Caco-2 (cell line): ENCODE measurements at regions of chr6 and their contacts with region 1.

Region 1: GRCh38 chr6:109705258-109705657 is 14.2 kb downstream of the FIG4 start:
- DNase-seq: peak; percentile 75 to 83
- H3K4me3 ChIP-seq: no peak overlapping the region
- H3K4me3 Mint-ChIP-seq: no peak overlapping the region
- H3K27ac Mint-ChIP-seq: no peak overlapping the region
- H3K4me1 ChIP-seq: no peaks in the 10 kb centered on the region
- H3K4me1 Mint-ChIP-seq: no peaks in the 10 kb centered on the region
- H3K27me3 ChIP-seq: no peaks in the 10 kb centered on the region
- H3K27me3 Mint-ChIP-seq: no peaks in the 10 kb centered on the region
- CTCF ChIP-seq: peak; percentile 96 to 97

Region 2: GRCh38 chr6:109455502-109456282 is 249.6 kb before region 1 on chr6 and contains the start of gene MICAL1:
- CTCF ChIA-PET with region 1: interaction called, 10 read pairs
- POLR2A ChIA-PET with region 1: no interaction called
- intact Hi-C with region 1: no loop called
- DNase-seq: peak; percentile 69 to 78
- H3K4me3 ChIP-seq: peak within 1 kb of the TSS; percentile 84
- H3K4me3 Mint-ChIP-seq: peak within 1 kb of the TSS; percentile 99
- H3K27ac Mint-ChIP-seq: peak within 1 kb of the TSS; percentile 76
- H3K4me1 ChIP-seq: peaks cover 13% of the 10 kb centered on the region
- H3K4me1 Mint-ChIP-seq: no peaks in the 10 kb centered on the region
- H3K27me3 ChIP-seq: no peaks in the 10 kb centered on the region
- H3K27me3 Mint-ChIP-seq: no peaks in the 10 kb centered on the region
- CTCF ChIP-seq: peak in 1 of 2 experiments; percentile 40
- total RNA-seq, gene MICAL1: 11.7 and 11.8 TPM in 2 replicates

Region 3: DNA sequence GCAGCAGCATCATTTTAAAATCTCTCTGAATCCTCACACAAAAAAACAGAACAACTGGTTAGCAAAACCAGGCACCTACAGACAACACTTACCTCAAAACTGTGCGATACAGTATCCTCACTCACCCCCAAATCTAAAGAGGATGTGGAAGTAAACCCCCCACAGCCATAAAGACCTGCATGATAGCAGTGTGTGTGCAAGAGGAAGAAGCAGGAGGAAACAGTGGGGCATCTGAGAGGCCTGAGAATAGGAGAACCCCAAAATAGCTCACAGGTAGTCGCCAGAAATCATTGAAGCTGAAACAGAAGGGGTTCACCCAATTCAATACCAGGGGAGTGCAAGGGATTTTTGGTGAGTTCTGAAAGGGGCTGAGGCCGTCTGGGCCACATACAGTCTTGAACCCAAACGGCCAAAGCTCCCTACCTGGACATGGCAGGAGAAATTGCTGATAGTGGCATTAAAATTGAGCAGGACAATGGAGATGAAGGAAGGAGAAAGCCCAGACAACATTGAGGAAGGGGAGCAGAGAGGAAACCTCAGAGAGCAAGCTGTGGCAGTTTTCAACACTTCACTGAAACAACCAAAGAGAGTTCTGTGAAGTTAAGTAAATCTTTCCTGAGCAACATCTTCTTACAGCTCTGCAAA is 115.6 kb after region 1 on chr6:
- CTCF ChIA-PET with region 1: interaction called, 4 read pairs
- POLR2A ChIA-PET with region 1: no interaction called
- intact Hi-C with region 1: loop called (anchors 1 kb)
- DNase-seq: no peak
- H3K4me3 ChIP-seq: no peak overlapping the region
- H3K4me3 Mint-ChIP-seq: no peak overlapping the region
- H3K27ac Mint-ChIP-seq: no peak overlapping the region
- H3K4me1 ChIP-seq: no peaks in the 10 kb centered on the region
- H3K4me1 Mint-ChIP-seq: no peaks in the 10 kb centered on the region
- H3K27me3 ChIP-seq: no peaks in the 10 kb centered on the region
- H3K27me3 Mint-ChIP-seq: no peaks in the 10 kb centered on the region
- CTCF ChIP-seq: no peak

Region 4: GRCh38 chr6:109892436-109893435 is 187.5 kb after region 1 on chr6:
- CTCF ChIA-PET with region 1: no interaction called
- POLR2A ChIA-PET with region 1: no interaction called
- intact Hi-C with region 1: loop called (anchors 2 kb)
- DNase-seq: peak in 1 of 2 experiments; percentile 31
- H3K4me3 ChIP-seq: no peak overlapping the region
- H3K4me3 Mint-ChIP-seq: peak overlapping the region; percentile 46
- H3K27ac Mint-ChIP-seq: no peak overlapping the region
- H3K4me1 ChIP-seq: peaks cover 8% of the 10 kb centered on the region; the same call in 1 of the 2 replicates
- H3K4me1 Mint-ChIP-seq: peaks cover 13% of the 10 kb centered on the region
- H3K27me3 ChIP-seq: no peaks in the 10 kb centered on the region
- H3K27me3 Mint-ChIP-seq: peaks cover 1% of the 10 kb centered on the region
- CTCF ChIP-seq: no peak

Region 5: DNA sequence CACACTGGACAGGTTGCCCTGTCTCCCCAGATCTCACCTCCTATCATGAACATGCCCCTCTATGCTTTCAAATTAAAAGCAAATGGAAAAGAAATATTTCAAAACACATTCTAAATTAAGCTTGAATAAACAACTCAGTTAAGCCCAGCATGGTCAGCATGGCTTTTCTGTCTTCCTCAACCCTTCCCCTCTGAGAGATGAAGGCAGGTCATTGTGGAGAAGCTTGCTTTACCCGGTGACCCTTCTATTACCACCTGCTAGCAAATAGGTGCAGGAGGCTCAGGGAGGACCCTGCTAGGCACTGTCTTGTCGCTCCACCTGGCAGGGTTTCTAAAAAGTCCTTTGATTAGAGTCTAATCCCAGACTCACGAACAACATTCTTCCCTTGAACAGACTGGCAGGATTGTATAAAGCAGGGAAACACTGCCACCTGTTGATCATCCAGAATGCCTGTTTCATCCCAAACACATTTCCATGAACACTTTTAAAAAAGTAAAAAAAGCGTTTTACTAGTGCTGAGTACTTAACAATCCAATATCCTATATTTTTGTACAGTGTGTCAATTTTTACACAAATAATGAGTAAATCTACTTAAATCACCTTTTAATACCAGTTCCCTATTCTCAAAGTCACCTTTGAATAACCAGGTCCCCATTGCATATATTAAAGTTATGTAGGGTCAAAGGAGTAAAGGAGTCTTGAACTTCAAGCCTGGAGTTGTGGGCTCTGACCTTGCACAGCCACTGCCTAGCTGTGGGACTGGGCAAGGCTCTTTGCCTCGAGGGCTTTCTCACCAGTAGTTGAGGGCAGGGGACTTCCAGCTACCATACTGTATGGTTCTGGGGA is 348.4 kb after region 1 on chr6:
- CTCF ChIA-PET with region 1: interaction called, 3 read pairs
- POLR2A ChIA-PET with region 1: no interaction called
- intact Hi-C with region 1: loop called (anchors 1 kb)
- DNase-seq: peak in 1 of 2 experiments; percentile 57
- H3K4me3 ChIP-seq: no peak overlapping the region
- H3K4me3 Mint-ChIP-seq: no peak overlapping the region
- H3K27ac Mint-ChIP-seq: no peak overlapping the region
- H3K4me1 ChIP-seq: no peaks in the 10 kb centered on the region
- H3K4me1 Mint-ChIP-seq: no peaks in the 10 kb centered on the region
- H3K27me3 ChIP-seq: no peaks in the 10 kb centered on the region; the same call in 1 of the 2 replicates
- H3K27me3 Mint-ChIP-seq: peaks cover 10% of the 10 kb centered on the region
- CTCF ChIP-seq: peak; percentile 67 to 68

Region 6: GRCh38 chr6:110114004-110114403 is 408.7 kb after region 1 on chr6:
- CTCF ChIA-PET with region 1: no interaction called
- POLR2A ChIA-PET with region 1: no interaction called
- intact Hi-C with region 1: no loop called
- DNase-seq: no peak
- H3K4me3 ChIP-seq: no peak overlapping the region
- H3K4me3 Mint-ChIP-seq: no peak overlapping the region
- H3K27ac Mint-ChIP-seq: no peak overlapping the region
- H3K4me1 ChIP-seq: no peaks in the 10 kb centered on the region
- H3K4me1 Mint-ChIP-seq: peaks cover 6% of the 10 kb centered on the region
- H3K27me3 ChIP-seq: no peaks in the 10 kb centered on the region
- H3K27me3 Mint-ChIP-seq: no peaks in the 10 kb centered on the region
- CTCF ChIP-seq: no peak